ENCODE measurements at regions of chr1 and their contacts with region 1.

Region 1: DNA sequence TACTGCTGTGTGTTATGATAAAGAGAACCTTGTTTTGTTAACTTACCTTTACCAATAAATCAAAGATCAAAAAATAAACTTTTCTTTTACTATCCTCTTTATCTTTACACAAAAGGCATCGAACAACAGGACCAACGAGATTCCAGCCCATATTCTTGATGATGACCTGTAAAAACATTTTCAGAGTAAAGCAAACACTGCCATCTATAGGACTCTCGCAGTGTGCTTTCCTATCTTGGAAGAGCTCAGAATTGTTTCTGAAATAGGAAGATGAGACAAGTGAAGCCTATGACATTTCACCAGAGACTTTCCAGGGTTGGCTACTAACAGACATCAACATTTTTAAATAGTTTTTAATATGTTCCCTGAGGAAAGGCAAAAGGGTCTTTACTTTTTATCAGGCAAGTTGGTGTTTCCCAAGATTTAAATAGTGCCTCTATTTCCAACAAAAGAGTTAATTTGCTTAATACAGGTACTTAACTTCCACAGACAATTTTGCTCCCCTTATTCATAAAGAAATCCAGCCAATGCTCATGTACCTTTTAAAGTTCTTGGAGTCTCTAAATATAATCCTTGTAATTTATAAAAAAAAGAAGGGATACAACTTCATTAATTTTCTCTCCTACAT is 7.3 kb downstream of the GLMN start:
- DNase-seq: no peak
- ATAC-seq: peak; percentile 43 to 59

Region 2: GRCh38 chr1:91511386-91511785 is 780.1 kb before region 1 on chr1:
- intact Hi-C with region 1: loop called (anchors 5 to 10 kb)
- DNase-seq: no peak
- ATAC-seq: peak in 1 of 2 donors; percentile 36

Region 3: GRCh38 chr1:91929250-91929649 is 362.2 kb before region 1 on chr1:
- intact Hi-C with region 1: loop called in 1 of 2 experiments (anchors 5 kb)
- DNase-seq: no peak
- ATAC-seq: peak in 1 of 2 donors; percentile 61

Region 4: GRCh38 chr1:91948501-91949355 is 342.8 kb before region 1 on chr1:
- intact Hi-C with region 1: no loop called
- DNase-seq: no peak
- ATAC-seq: peak in 1 of 2 donors; percentile 44

Region 5: GRCh38 chr1:91997607-91998195 is 293.8 kb before region 1 on chr1:
- intact Hi-C with region 1: loop called in 1 of 2 experiments (anchors 5 kb)
- DNase-seq: no peak
- ATAC-seq: no peak